Activated T-helper 1 cell treated with anti-CD3 and anti-CD28 coated beads, Interleukin-12 subunit alpha, Interleukin-12 subunit beta, Interleukin-2, Interleukin-4 antibody, amounts not matched to agents 30 ng/mL and 10 ng/mL and 1 ng/mL, durations not matched to agents 14 hours and 24 hours and 36 hours (primary cell): ENCODE measurements at regions of chr4 and their contacts with region 1.

Region 1: DNA sequence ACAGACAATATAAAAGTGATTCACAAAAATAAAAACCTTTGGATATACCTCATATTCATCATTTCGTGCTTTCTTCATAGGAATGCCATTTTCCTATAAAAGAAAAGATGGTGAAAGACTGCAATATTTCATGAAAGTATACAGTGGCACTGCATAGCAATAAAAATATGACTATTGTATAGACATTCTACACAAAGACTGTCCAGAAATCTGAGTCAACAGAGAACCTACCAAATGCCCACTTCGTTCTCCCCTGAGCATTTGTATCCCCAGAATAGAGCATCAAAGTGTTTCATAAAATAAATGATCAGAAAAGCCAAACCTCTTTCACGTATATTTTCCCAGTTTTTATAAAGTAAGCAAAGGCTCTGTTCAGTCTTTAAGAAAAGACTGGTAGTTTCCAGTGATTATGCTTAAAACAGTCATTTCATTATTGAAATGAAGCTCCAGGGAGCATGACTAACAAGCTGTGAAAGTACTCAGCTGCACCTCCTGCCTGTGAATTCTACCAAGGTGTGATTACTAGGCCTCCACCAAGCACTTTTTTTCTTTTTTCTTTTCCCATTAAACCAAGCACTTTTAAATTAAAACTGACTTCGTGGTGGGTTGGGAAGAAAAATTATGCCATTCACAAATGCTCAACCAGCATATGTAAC is 20.2 kb downstream of the PPA2 start:
- DNase-seq: no peak
- H3K4me3 Mint-ChIP-seq: no peak overlapping the region
- H3K27ac Mint-ChIP-seq: peak overlapping the region; percentile 45
- H3K4me1 Mint-ChIP-seq: peaks cover 33% of the 10 kb centered on the region
- H3K27me3 Mint-ChIP-seq: no peaks in the 10 kb centered on the region

Region 2: GRCh38 chr4:104719539-104720230 is 734.0 kb before region 1 on chr4:
- intact Hi-C with region 1: no loop called
- DNase-seq: no peak
- H3K4me3 Mint-ChIP-seq: no peak overlapping the region
- H3K27ac Mint-ChIP-seq: no peak overlapping the region
- H3K4me1 Mint-ChIP-seq: no peaks in the 10 kb centered on the region
- H3K27me3 Mint-ChIP-seq: no peaks in the 10 kb centered on the region

Region 3: GRCh38 chr4:105140684-105141490 is 312.8 kb before region 1 on chr4:
- intact Hi-C with region 1: loop called (anchors 1 kb)
- DNase-seq: no peak
- H3K4me3 Mint-ChIP-seq: no peak overlapping the region
- H3K27ac Mint-ChIP-seq: no peak overlapping the region
- H3K4me1 Mint-ChIP-seq: peaks cover 21% of the 10 kb centered on the region
- H3K27me3 Mint-ChIP-seq: no peaks in the 10 kb centered on the region

Region 4: DNA sequence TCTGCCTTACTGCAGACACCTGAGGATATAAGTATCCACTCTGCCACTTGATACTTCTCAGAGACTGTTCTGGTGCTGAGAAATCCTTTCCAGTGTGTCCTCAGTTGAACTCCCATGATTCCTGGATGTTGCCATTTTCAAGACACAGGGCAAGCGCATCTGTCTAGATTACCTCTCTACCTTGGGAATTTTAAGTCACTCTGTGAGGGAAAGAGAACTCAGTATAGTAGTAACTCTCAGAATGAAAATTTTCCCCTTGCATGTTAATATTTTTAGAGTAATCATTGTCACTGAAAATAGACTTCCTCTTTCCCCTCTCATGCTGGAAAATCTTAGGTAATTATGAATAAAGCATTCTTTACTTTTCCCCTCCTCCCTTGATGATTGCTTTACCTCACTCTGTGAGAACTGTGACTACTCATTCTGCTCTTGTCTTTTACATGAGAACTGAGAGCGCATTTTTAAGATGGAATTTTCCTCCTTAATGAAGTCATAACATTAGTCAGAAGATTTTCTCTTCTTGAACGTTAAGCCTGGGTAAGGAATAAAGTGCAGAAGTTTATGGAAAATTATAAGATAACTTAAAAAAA is 262.0 kb before region 1 on chr4:
- intact Hi-C with region 1: loop called (anchors 5 kb)
- DNase-seq: no peak
- H3K4me3 Mint-ChIP-seq: peak overlapping the region; percentile 8
- H3K27ac Mint-ChIP-seq: peak overlapping the region; percentile 74
- H3K4me1 Mint-ChIP-seq: peaks cover 53% of the 10 kb centered on the region
- H3K27me3 Mint-ChIP-seq: no peaks in the 10 kb centered on the region

Region 5: GRCh38 chr4:105369988-105370387 is 83.7 kb before region 1 on chr4:
- intact Hi-C with region 1: no loop called
- DNase-seq: no peak
- H3K4me3 Mint-ChIP-seq: no peak overlapping the region
- H3K27ac Mint-ChIP-seq: no peak overlapping the region
- H3K4me1 Mint-ChIP-seq: no peaks in the 10 kb centered on the region
- H3K27me3 Mint-ChIP-seq: no peaks in the 10 kb centered on the region

Region 6: DNA sequence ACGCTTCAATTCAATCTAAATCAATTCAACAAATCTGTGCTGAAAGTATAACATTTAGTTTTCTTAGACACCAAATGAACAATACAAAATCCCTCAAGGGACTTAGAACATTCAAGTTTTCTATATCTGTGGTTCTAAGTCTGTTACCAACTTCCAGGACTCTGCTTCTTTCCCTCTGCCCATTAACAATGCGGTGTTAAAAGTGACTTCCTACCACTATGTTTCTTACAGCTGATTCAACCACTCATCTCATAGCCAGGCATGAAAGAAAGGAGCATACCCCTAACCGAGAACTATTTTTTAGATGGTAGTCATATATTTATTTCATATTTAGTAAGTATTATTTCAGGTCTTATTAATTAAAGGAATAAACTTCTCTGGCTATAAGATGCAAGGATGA is 18.7 kb before region 1 on chr4:
- intact Hi-C with region 1: loop called (anchors 2 kb)
- DNase-seq: no peak
- H3K4me3 Mint-ChIP-seq: no peak overlapping the region
- H3K27ac Mint-ChIP-seq: no peak overlapping the region
- H3K4me1 Mint-ChIP-seq: no peaks in the 10 kb centered on the region
- H3K27me3 Mint-ChIP-seq: no peaks in the 10 kb centered on the region

Region 7: GRCh38 chr4:105657117-105657765 is 203.6 kb after region 1 on chr4:
- intact Hi-C with region 1: no loop called
- DNase-seq: no peak
- H3K4me3 Mint-ChIP-seq: no peak overlapping the region
- H3K27ac Mint-ChIP-seq: no peak overlapping the region
- H3K4me1 Mint-ChIP-seq: no peaks in the 10 kb centered on the region
- H3K27me3 Mint-ChIP-seq: peaks cover 2% of the 10 kb centered on the region